MCF 10A (cell line): ENCODE measurements at regions of chr18 and their contacts with region 1.

Region 1: GRCh38 chr18:11995445-11996189 is 14.3 kb downstream of the IMPA2 start:
- DNase-seq: peak; percentile 76
- H3K4me3 Mint-ChIP-seq: no peak overlapping the region
- H3K27ac Mint-ChIP-seq: peak overlapping the region; percentile 97
- H3K4me1 Mint-ChIP-seq: peaks cover 29% of the 10 kb centered on the region
- H3K27me3 Mint-ChIP-seq: no peaks in the 10 kb centered on the region
- CTCF ChIP-seq: peak; percentile 88

Region 2: DNA sequence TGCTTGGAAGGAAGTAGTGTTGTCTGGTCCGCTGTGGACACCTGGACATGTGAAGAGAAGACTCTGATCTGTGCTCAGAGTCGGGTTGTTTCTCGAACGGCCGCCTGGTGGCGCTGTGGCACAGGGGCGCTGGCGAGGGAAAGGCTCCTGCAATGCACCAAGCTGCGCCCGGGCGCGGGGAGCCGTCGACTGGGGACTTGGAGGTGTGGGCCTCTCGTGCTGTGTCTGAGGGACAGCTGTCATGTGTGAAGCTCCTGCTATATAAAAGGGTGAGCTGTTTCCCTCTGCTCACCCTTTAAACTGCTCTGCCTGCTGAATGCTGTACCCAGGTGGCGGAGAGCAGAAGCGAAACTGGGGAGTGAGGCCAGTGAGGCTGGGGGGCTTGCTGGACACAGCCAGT is 262.6 kb before region 1 on chr18:
- CTCF ChIA-PET with region 1: interaction called, 25 read pairs
- POLR2A ChIA-PET with region 1: no interaction called
- intact Hi-C with region 1: loop called (anchors 1 kb)
- DNase-seq: peak; percentile 75
- H3K4me3 Mint-ChIP-seq: peak overlapping the region; percentile 17
- H3K27ac Mint-ChIP-seq: no peak overlapping the region
- H3K4me1 Mint-ChIP-seq: no peaks in the 10 kb centered on the region
- H3K27me3 Mint-ChIP-seq: peaks cover 30% of the 10 kb centered on the region
- CTCF ChIP-seq: peak; percentile 90

Region 3: GRCh38 chr18:11932393-11932792 is 63.2 kb before region 1 on chr18:
- CTCF ChIA-PET with region 1: interaction called, 458 read pairs
- POLR2A ChIA-PET with region 1: interaction called, 54 read pairs
- intact Hi-C with region 1: no loop called
- DNase-seq: no peak
- H3K4me3 Mint-ChIP-seq: no peak overlapping the region
- H3K27ac Mint-ChIP-seq: no peak overlapping the region
- H3K4me1 Mint-ChIP-seq: no peaks in the 10 kb centered on the region
- H3K27me3 Mint-ChIP-seq: no peaks in the 10 kb centered on the region
- CTCF ChIP-seq: no peak

Region 4: GRCh38 chr18:11955239-11956029 is 40.2 kb before region 1 on chr18:
- CTCF ChIA-PET with region 1: interaction called, 458 read pairs
- POLR2A ChIA-PET with region 1: interaction called, 13 read pairs
- intact Hi-C with region 1: no loop called
- DNase-seq: peak; percentile 92
- H3K4me3 Mint-ChIP-seq: peak overlapping the region; percentile 11
- H3K27ac Mint-ChIP-seq: peak overlapping the region; percentile 90
- H3K4me1 Mint-ChIP-seq: peaks cover 23% of the 10 kb centered on the region
- H3K27me3 Mint-ChIP-seq: no peaks in the 10 kb centered on the region
- CTCF ChIP-seq: no peak

Region 5: DNA sequence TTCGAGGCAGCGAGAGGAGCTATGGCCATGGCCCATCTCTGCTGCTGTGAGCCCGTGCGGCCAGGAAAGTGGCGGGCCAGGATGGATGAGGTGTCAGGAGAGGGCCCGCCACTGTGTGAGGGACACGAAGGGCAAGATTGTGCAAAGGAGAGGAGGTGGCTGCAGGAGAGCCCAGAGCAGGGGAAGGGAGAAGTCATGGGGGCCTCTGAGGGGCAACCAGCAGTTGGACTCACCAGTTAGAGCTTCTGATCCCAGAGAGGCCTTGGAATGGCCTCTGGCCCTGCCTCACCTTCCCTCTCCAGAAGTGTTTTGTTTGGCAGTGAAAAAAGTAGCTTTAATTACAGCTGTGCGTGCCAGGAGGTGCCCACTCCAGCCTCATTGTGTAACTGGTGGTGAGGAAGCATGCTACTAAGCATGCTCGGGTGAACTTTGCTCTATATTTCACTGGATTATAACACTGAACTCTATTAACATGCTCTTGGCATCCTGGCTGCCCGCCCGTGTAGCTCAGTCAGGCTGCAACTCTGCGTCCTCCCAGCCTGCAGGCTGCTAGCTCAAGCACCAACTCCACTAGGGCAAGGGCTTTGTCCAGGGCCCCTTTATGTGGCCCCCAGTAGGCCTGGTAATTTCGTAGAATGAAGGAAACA is 19.9 kb after region 1 on chr18:
- CTCF ChIA-PET with region 1: interaction called, 18 read pairs
- POLR2A ChIA-PET with region 1: interaction called, 12 read pairs
- intact Hi-C with region 1: no loop called
- DNase-seq: peak; percentile 94
- H3K4me3 Mint-ChIP-seq: no peak overlapping the region
- H3K27ac Mint-ChIP-seq: peak overlapping the region; percentile 59
- H3K4me1 Mint-ChIP-seq: peaks cover 17% of the 10 kb centered on the region
- H3K27me3 Mint-ChIP-seq: no peaks in the 10 kb centered on the region
- CTCF ChIP-seq: no peak

Region 6: DNA sequence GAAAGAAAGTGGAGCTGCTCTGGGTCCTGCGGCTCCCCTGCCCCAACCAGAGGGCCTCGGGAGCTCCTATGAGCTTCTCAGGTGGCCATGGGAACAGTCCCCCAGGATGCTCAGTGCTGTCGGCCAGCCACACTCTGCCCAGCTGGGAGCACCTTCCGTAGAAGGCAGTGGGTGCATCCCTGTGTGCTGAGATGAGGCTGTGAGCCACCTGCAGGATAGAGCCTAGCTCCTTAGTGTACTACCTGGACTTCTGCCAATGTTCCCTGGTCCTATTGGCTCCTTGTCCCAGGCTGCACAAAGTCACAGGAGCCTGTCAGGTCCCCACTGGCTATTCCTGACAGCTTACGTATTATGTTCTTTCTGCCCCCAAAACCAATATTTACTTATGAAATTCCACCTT is 428.2 kb after region 1 on chr18:
- CTCF ChIA-PET with region 1: no interaction called
- POLR2A ChIA-PET with region 1: no interaction called
- intact Hi-C with region 1: no loop called
- DNase-seq: no peak
- H3K4me3 Mint-ChIP-seq: no peak overlapping the region
- H3K27ac Mint-ChIP-seq: no peak overlapping the region
- H3K4me1 Mint-ChIP-seq: peaks cover 5% of the 10 kb centered on the region
- H3K27me3 Mint-ChIP-seq: no peaks in the 10 kb centered on the region
- CTCF ChIP-seq: no peak

Region 7: GRCh38 chr18:12819322-12819721 is 823.7 kb after region 1 on chr18:
- CTCF ChIA-PET with region 1: no interaction called
- POLR2A ChIA-PET with region 1: no interaction called
- intact Hi-C with region 1: no loop called
- DNase-seq: no peak
- H3K4me3 Mint-ChIP-seq: no peak overlapping the region
- H3K27ac Mint-ChIP-seq: peak overlapping the region; percentile 59
- H3K4me1 Mint-ChIP-seq: no peaks in the 10 kb centered on the region
- H3K27me3 Mint-ChIP-seq: no peaks in the 10 kb centered on the region
- CTCF ChIP-seq: no peak